Activated CD4-positive, alpha-beta memory T cell treated with anti-CD3 and anti-CD28 coated beads, Interleukin-2, amount 10 ng/mL, durations not matched to agents 7 days and 5 days (primary cell): ENCODE measurements at regions of chr14 and their contacts with region 1.

Region 1: DNA sequence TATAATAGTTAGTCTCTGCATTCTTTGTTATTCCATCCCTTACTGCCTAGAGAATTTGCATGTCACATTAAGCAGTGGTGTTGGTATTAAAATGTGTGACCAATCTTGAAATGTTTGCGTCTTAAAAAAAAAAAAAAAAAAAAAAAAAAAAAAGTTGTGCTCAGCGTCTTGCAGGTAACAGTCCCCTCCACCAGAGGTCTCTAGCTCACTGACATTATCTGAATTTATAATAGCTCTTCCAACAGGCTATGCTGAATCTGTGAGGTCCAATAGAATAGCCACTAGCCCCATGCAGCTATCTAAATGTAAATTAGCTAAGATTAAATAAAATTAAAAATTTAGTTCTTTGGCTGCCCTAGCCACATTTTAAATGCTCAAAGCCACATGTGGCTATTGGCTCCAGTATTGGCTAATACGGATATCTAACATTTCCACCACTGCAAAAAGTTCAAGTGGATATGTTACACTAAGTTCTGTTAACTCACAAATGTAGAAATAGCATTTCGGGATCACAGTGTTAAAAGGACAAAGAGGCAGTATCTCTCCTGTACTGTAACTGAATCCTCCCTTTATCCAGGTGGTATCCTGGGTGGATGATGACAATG is 28.7 kb downstream of the NKX2-8 start:
- DNase-seq: no peak
- H3K4me3 Mint-ChIP-seq: no peak overlapping the region
- H3K27ac Mint-ChIP-seq: no peak overlapping the region
- H3K4me1 Mint-ChIP-seq: no peaks in the 10 kb centered on the region
- H3K27me3 Mint-ChIP-seq: peaks cover 6% of the 10 kb centered on the region

Region 2: GRCh38 chr14:36293824-36294223 is 259.9 kb before region 1 on chr14:
- CTCF ChIA-PET with region 1: no interaction called
- POLR2A ChIA-PET with region 1: no interaction called
- DNase-seq: no peak
- H3K4me3 Mint-ChIP-seq: no peak overlapping the region
- H3K27ac Mint-ChIP-seq: no peak overlapping the region
- H3K4me1 Mint-ChIP-seq: no peaks in the 10 kb centered on the region
- H3K27me3 Mint-ChIP-seq: no peaks in the 10 kb centered on the region

Region 3: DNA sequence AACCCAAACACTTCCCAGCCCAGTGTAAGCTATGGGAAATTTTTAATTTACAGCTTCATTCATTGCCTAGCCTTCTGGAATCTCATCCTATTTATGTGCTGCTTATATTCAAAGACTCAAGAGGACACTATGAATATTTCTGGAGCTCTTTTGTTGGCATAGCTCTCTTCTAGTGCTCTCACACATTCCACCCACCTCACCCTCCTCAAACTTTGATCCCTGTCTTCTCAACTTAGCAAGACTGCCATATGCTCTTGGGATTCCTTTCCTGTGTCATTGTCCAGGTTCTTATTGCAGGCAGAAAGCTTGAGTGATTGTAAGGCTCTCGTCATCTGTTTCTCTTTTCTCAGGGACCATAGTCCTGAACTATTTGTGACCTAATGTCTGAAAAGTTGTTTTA is 15.7 kb before region 1 on chr14:
- CTCF ChIA-PET with region 1: interaction called, 20 read pairs
- POLR2A ChIA-PET with region 1: no interaction called
- DNase-seq: no peak
- H3K4me3 Mint-ChIP-seq: no peak overlapping the region
- H3K27ac Mint-ChIP-seq: no peak overlapping the region
- H3K4me1 Mint-ChIP-seq: no peaks in the 10 kb centered on the region
- H3K27me3 Mint-ChIP-seq: peaks cover 10% of the 10 kb centered on the region

Region 4: DNA sequence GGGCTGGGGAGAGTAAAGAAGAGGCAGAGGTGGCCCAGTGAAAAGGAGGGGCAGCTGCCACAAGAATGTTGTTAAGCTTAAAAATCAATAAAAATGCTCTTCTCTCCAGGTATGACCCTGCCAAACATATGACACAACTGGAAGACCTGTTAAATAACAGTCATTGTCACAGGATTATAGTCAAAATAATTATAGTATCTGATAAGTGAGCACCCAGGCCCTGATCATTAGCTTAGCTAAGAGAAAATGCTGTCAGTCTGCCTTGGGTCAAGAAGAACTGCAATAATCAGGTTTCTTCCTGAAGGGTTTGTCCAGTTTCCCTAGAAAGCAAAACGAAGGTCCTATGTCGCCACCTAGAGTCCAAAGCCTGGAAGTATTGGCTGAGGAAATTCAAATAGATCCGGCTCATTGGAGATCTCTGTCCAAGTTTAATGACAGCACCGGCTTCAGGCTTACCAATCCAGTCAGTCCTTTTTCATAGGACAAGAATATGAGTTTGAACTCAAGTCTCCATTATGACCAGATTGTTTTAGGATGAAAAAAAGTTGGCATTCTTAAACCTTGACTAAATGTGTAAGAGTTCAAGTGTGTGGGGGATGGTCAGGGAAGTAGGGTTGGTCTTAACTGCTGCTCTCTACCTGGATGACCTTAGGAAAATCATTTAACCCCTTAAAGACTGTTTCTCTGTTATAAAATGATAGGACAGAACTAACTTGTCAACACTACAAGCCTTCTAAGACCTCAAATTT is 51.2 kb after region 1 on chr14:
- CTCF ChIA-PET with region 1: interaction called, 22 read pairs
- POLR2A ChIA-PET with region 1: no interaction called
- DNase-seq: peak; percentile 29
- H3K4me3 Mint-ChIP-seq: no peak overlapping the region
- H3K27ac Mint-ChIP-seq: no peak overlapping the region
- H3K4me1 Mint-ChIP-seq: no peaks in the 10 kb centered on the region
- H3K27me3 Mint-ChIP-seq: peaks cover 3% of the 10 kb centered on the region

Region 5: DNA sequence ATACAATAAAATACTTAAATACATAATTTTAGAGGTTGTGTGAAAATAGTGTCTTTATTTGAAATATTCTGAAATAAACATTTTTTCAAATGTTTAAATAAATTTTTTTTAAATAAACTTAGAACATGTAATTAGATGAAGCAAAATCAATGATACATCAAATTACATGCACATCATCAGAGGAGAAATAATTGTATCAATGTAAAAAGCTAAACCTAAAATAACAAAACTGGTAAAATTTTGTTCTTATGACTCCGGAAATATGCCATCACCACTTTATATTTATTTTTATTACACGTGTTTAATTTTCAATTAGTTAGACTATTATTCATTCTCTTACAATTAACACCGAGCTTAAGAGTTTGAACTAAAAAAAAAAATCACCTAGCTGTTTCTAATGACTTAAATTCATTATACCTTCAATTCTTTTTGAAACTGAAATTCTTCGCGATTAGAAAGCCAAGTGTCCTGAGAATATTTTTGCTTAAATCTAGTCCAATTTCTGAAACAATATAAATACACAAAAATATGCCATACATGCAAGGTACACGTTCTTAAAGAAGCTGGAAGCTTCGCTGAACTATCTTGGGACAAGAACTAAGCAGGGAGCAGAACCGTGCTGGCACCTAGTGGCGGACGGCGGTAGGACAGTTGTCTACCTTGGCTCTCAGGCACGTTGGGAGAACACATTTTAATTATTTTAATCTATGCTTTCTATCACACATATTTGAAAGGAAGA is 388.2 kb after region 1 on chr14:
- CTCF ChIA-PET with region 1: interaction called, 23 read pairs
- POLR2A ChIA-PET with region 1: no interaction called
- DNase-seq: peak; percentile 55
- H3K4me3 Mint-ChIP-seq: no peak overlapping the region
- H3K27ac Mint-ChIP-seq: no peak overlapping the region
- H3K4me1 Mint-ChIP-seq: no peaks in the 10 kb centered on the region
- H3K27me3 Mint-ChIP-seq: no peaks in the 10 kb centered on the region